Activated naive CD8-positive, alpha-beta T cell treated with anti-CD3 and anti-CD28 coated beads, Interleukin-2, amount 10 ng/mL, durations not matched to agents 7 days and 5 days (primary cell): ENCODE measurements at regions of chr12 and their contacts with region 1.

Region 1: GRCh38 chr12:53200458-53201176 is 6.4 kb downstream of the ITGB7 start:
- DNase-seq: peak; percentile 40
- ATAC-seq: peak; percentile 46
- H3K4me3 Mint-ChIP-seq: peak overlapping the region; percentile 69
- H3K27ac Mint-ChIP-seq: peak overlapping the region; percentile 80
- H3K4me1 Mint-ChIP-seq: peaks cover 53% of the 10 kb centered on the region
- H3K27me3 Mint-ChIP-seq: no peaks in the 10 kb centered on the region

Region 2: GRCh38 chr12:53071591-53072551 is 128.7 kb before region 1 on chr12:
- POLR2A ChIA-PET with region 1: no interaction called
- DNase-seq: no peak
- ATAC-seq: no peak
- H3K4me3 Mint-ChIP-seq: no peak overlapping the region
- H3K27ac Mint-ChIP-seq: no peak overlapping the region
- H3K4me1 Mint-ChIP-seq: peaks cover 4% of the 10 kb centered on the region
- H3K27me3 Mint-ChIP-seq: no peaks in the 10 kb centered on the region

Region 3: DNA sequence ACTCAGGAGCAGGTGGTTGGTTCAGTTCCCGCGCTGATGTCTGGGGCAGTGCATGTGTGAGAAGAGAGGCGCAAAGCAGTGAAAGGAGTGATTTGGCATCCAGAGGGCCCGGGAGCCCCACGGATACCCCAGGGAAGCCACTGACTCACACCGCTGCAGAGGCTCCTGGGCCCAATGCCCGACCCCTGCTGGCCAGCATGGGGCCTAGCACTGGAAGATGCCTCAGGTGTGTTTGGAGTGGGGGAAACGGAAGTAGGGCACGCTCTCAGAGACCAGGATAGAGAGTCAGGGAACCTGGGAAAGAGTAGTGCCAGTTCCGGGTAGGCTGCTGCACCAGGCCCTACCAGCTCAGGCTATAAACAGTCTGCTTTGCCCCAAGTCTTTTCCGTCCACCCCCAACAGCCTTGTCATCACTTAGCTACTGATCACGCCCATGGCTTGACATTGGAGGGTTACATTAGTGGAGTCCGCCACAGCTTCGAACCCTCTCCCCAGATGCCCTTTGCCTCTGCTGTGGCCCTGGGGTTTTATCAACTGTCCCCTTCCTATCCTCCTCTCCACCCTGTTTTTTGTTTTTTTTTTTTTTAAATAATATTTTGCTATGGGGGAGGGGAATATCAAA is 10.4 kb before region 1 on chr12:
- POLR2A ChIA-PET with region 1: interaction called, 28 read pairs
- DNase-seq: peak; percentile 63
- ATAC-seq: peak; percentile 83
- H3K4me3 Mint-ChIP-seq: no peak overlapping the region
- H3K27ac Mint-ChIP-seq: peak overlapping the region; percentile 69
- H3K4me1 Mint-ChIP-seq: peaks cover 21% of the 10 kb centered on the region
- H3K27me3 Mint-ChIP-seq: no peaks in the 10 kb centered on the region